GM12878 (cell line): ENCODE measurements at regions of chr3 and their contacts with region 1.

Region 1: DNA sequence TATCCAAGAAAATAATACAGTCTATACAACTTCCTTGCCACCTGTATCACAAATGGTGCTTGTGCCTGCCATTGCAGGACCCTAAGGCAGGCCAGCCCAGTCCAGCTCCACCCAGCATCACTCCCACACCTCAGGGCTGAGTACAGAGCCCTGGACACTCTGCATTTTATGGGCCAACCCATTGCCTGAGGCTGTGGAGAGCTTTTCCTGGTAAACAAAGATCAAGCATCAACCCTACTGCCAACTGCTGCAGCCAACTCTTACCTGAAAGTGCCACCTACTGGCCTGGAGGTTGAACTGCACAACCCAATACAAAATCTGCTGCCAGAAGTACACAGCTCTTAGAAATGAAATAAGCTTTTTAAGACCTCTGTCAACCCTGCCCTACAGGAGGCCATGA is 1082.2 kb downstream of the NAALADL2 start:
- DNase-seq: no peak
- ATAC-seq: peak; percentile 92
- H3K4me3 ChIP-seq: no peak overlapping the region
- H3K27ac ChIP-seq: no peak overlapping the region
- H3K4me1 ChIP-seq: no peaks in the 10 kb centered on the region
- H3K27me3 ChIP-seq: no peaks in the 10 kb centered on the region
- CTCF ChIP-seq: peak; percentile 46 to 70 (median 60)
- EP300 ChIP-seq: no peak
- POLR2A ChIP-seq: no peak
- RAD21 ChIP-seq: peak; percentile 74

Region 2: DNA sequence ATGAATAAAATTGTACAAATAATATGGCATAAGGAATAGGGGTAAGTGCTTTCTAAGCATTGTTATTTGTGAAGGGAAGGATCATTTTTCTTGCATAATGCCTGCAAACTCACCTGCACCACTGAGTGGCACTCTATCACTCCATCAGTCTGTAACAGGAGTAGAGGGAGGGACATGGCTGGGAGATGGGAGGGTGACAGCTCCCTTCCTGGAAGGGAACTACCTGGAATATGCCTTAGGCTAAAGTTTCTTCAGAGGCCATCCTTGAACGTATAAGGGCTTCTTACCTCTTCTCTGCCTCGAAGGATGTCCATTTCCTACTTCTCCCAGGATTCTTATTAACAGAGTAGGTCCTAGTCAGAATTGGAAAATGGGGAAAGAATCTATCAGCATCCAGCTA is 1079.2 kb before region 1 on chr3:
- CTCF ChIA-PET with region 1: no interaction called
- POLR2A ChIA-PET with region 1: no interaction called
- RAD21 ChIA-PET with region 1: interaction called, 4 read pairs
- SMC1A ChIA-PET with region 1: no interaction called
- in situ Hi-C with region 1: no loop called
- intact Hi-C with region 1: loop called (anchors 10 kb)
- DNase-seq: no peak
- ATAC-seq: peak; percentile 36; the same call in 2 of the 3 replicates
- H3K4me3 ChIP-seq: no peak overlapping the region
- H3K27ac ChIP-seq: no peak overlapping the region
- H3K4me1 ChIP-seq: no peaks in the 10 kb centered on the region
- H3K27me3 ChIP-seq: no peaks in the 10 kb centered on the region
- CTCF ChIP-seq: peak in 2 of 3 experiments; percentile 16 to 33; a peak in 2 of 6 replicates
- EP300 ChIP-seq: no peak
- POLR2A ChIP-seq: no peak
- RAD21 ChIP-seq: peak; percentile 43; the same call in 1 of the 2 replicates

Region 3: GRCh38 chr3:175255698-175256097 is 685.7 kb before region 1 on chr3:
- CTCF ChIA-PET with region 1: interaction called, 3 read pairs
- POLR2A ChIA-PET with region 1: no interaction called
- RAD21 ChIA-PET with region 1: no interaction called
- SMC1A ChIA-PET with region 1: no interaction called
- in situ Hi-C with region 1: no loop called
- intact Hi-C with region 1: loop called (anchors 10 kb)
- DNase-seq: no peak
- ATAC-seq: peak; percentile 11
- H3K4me3 ChIP-seq: no peak overlapping the region
- H3K27ac ChIP-seq: no peak overlapping the region
- H3K4me1 ChIP-seq: no peaks in the 10 kb centered on the region
- H3K27me3 ChIP-seq: no peaks in the 10 kb centered on the region
- CTCF ChIP-seq: no peak
- EP300 ChIP-seq: no peak
- POLR2A ChIP-seq: no peak
- RAD21 ChIP-seq: no peak

Region 4: GRCh38 chr3:175422744-175423143 is 518.6 kb before region 1 on chr3:
- CTCF ChIA-PET with region 1: interaction called, 5 read pairs
- POLR2A ChIA-PET with region 1: no interaction called
- RAD21 ChIA-PET with region 1: interaction called, 4 read pairs
- SMC1A ChIA-PET with region 1: no interaction called
- in situ Hi-C with region 1: no loop called
- intact Hi-C with region 1: loop called (anchors 5 kb)
- DNase-seq: no peak
- ATAC-seq: peak; percentile 74; the same call in 2 of the 3 replicates
- H3K4me3 ChIP-seq: no peak overlapping the region
- H3K27ac ChIP-seq: no peak overlapping the region
- H3K4me1 ChIP-seq: no peaks in the 10 kb centered on the region
- H3K27me3 ChIP-seq: no peaks in the 10 kb centered on the region
- CTCF ChIP-seq: peak in 1 of 3 experiments; percentile 14; a peak in 2 of 6 replicates
- EP300 ChIP-seq: no peak
- POLR2A ChIP-seq: no peak
- RAD21 ChIP-seq: peak; percentile 43